ENCODE measurements at regions of chr3 and their contacts with region 1.

Region 1: GRCh38 chr3:195863121-195864006 is 45.0 kb downstream of the TNK2 start:
- DNase-seq: peak; percentile 67
- ATAC-seq: peak; percentile 94
- H3K4me3 Mint-ChIP-seq: no peak overlapping the region
- H3K27ac Mint-ChIP-seq: peak overlapping the region; percentile 66
- H3K4me1 Mint-ChIP-seq: peaks cover 11% of the 10 kb centered on the region
- H3K27me3 Mint-ChIP-seq: no peaks in the 10 kb centered on the region
- CTCF ChIP-seq: peak; percentile 43

Region 2: DNA sequence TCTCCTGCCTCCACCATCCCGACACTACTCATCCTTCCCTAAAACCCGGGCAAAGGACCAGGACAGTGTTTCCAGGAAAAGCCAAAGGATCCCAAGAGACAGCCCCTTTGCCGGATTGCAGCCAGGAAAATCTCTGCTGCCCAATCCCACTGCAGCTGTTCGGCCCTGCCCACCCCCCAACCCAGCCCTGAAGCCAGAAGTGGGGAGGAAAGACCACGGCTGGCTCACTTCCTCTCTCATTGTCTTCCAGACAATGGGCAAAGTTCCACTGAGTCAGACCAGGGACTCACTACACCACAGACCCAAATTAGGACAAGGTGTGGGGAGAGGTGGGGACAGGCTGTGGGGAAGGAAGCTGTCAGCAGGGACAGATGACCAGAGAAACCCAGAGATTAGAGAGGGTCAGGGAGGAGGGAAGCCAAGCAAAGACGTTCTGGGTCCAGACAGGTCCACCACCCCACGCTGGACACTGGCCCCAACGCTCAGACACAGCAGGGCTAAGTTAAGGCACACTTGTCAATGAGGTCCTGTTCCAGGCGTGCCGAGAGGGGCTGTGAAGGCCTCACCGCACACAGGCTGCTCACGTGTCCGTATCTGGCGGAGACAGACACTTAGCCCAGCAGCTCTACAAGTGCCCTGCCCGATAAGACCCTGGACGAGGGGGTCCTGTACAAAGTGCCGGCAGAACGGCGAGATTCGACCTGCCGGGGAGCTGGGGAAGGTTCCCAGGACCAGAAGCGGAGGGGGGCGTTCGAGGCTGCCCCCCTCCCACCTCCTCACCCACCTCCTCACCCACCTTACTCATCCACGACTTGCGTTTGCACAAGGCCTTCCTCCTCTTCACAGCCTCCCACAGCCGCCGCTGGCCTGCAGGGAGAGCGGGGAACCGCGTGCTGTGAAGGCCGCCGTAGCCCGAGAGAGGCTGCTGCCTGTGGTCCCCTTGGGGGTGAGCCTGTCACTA is 23.1 kb after region 1 on chr3:
- CTCF ChIA-PET with region 1: interaction called, 67 read pairs
- POLR2A ChIA-PET with region 1: no interaction called
- intact Hi-C with region 1: no loop called
- DNase-seq: no peak
- ATAC-seq: no peak
- H3K4me3 Mint-ChIP-seq: no peak overlapping the region
- H3K27ac Mint-ChIP-seq: no peak overlapping the region
- H3K4me1 Mint-ChIP-seq: no peaks in the 10 kb centered on the region
- H3K27me3 Mint-ChIP-seq: no peaks in the 10 kb centered on the region
- CTCF ChIP-seq: no peak

Region 3: DNA sequence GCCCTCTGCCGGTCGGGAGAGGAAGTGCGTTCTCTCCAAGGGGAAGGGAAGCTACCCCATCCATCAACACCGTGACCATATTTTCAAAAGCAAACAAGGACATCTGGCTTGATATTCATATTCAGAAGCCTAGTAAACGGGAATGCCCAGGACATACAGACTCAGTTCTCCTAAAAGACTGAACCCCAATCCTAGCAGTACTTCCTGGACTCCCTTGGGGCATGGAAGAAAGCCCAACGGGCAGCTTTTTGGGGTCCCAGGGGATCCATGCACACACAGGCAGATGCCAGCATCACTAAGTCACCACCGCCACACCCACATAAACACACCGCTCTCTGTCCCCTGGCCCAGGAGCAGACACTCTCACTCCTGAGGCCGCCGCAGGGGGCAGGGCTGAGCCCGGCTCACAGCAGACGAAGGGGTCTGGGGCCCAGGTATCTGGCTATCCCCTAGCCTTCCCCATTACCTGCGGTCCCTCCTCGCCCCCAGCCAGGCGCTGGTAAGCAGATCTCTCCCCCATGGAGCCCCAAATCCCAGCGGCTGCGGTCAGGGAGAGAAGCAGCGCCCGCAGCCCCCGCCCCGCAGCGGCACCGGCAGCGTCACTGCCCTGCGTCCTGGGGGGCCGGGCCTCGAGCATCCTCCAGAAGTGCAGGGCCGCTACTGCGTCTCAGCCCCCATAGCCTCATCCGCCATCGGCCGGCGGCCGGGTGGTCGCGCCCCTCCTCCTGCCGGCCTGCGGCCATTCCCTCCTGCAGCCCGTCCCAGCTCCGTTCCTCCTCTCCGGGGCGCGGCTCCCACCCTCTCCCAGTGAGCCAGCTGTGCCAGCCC is 31.6 kb after region 1 on chr3:
- CTCF ChIA-PET with region 1: interaction called, 67 read pairs
- POLR2A ChIA-PET with region 1: interaction called, 6 read pairs
- intact Hi-C with region 1: loop called (anchors 1 kb)
- DNase-seq: peak; percentile 72
- ATAC-seq: peak; percentile 72
- H3K4me3 Mint-ChIP-seq: peak overlapping the region; percentile 88
- H3K27ac Mint-ChIP-seq: peak overlapping the region; percentile 88
- H3K4me1 Mint-ChIP-seq: peaks cover 57% of the 10 kb centered on the region
- H3K27me3 Mint-ChIP-seq: no peaks in the 10 kb centered on the region
- CTCF ChIP-seq: peak; percentile 60